Gastrocnemius medialis (tissue), 4 donors: ENCODE measurements at regions of chr15 and their contacts with region 1.

Region 1: GRCh38 chr15:70701891-70702568 is 61.3 kb downstream of the UACA start:
- DNase-seq: peak; percentile 48 to 56
- ATAC-seq: peak; percentile 85 to 90
- H3K4me3 ChIP-seq: peak overlapping the region; percentile 41 to 53 (median 46)
- H3K27ac ChIP-seq: peak overlapping the region; percentile 79 to 92 (median 88)
- H3K4me1 ChIP-seq: peaks cover 61 to 92% of the 10 kb centered on the region in 2 donors
- H3K27me3 ChIP-seq: no peaks in the 10 kb centered on the region
- CTCF ChIP-seq: no peak
- POLR2A ChIP-seq: peak; percentile 65 to 85

Region 2: DNA sequence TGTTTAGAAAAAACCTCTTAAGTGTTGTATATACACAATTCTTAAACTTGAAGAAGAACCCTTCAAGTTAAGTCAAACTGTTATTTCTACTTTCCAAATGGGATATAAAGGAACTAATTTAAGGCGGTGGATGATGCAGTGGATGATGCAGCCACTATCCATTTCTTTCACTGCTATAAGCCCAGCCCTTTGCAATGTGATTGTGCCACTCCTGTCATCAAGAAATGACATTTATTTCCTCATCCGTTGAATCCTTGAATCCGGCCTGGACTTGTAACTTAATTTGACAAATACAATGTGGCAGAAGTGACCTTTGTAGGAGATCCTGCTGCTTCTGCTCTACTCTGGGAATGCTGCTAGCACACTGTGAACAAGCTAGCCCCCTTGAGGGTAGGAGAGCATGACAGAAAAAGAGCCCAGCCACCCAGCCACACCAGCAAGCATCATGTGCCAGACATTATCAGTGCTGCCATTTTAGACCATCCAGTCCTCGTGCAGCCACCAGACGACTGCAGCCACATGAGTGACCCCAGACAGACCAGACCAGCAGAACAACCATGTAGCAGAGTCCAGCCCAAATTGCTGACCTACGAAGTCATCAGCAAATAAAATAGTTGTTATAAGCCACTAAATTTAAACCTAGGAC is 13.9 kb after region 1 on chr15:
- in situ Hi-C with region 1: no loop called
- intact Hi-C with region 1: loop called (anchors 2 kb)
- DNase-seq: peak in 1 of 2 donors; percentile 38
- ATAC-seq: peak; percentile 25 to 48
- H3K4me3 ChIP-seq: no peak overlapping the region
- H3K27ac ChIP-seq: peak overlapping the region; percentile 81 to 88 (median 84)
- H3K4me1 ChIP-seq: peaks cover 75 to 93% of the 10 kb centered on the region in 2 donors
- H3K27me3 ChIP-seq: no peaks in the 10 kb centered on the region
- CTCF ChIP-seq: no peak
- POLR2A ChIP-seq: no peak

Region 3: DNA sequence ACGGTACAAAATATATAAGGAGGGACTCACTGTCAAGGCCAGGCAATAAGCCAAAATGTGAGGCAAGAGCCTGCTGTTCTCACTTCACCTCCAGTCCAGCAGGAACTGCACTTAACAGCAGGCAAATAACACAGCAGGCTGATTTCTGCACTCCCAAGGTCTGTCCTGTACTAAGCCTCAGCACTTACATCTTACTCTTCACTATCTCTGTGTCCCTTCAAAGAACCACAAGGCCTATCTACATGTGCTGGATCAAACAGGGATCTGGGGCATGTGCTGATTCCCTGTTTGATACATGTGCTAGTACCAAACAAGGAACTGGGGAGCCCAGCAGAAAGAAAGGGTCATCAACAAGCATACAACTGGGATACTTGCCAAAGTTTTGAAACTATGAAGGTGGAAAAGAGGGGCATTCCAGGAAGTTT is 39.1 kb after region 1 on chr15:
- in situ Hi-C with region 1: no loop called
- intact Hi-C with region 1: loop called (anchors 5 kb)
- DNase-seq: peak; percentile 90 to 92
- ATAC-seq: peak; percentile 81 to 87
- H3K4me3 ChIP-seq: peak overlapping the region in 2 of 4 donors; percentile 24 to 44
- H3K27ac ChIP-seq: peak overlapping the region; percentile 88 to 95 (median 91)
- H3K4me1 ChIP-seq: peaks cover 78 to 87% of the 10 kb centered on the region in 2 donors
- H3K27me3 ChIP-seq: no peaks in the 10 kb centered on the region
- CTCF ChIP-seq: no peak
- POLR2A ChIP-seq: peak in 1 of 2 donors; percentile 45

Region 4: DNA sequence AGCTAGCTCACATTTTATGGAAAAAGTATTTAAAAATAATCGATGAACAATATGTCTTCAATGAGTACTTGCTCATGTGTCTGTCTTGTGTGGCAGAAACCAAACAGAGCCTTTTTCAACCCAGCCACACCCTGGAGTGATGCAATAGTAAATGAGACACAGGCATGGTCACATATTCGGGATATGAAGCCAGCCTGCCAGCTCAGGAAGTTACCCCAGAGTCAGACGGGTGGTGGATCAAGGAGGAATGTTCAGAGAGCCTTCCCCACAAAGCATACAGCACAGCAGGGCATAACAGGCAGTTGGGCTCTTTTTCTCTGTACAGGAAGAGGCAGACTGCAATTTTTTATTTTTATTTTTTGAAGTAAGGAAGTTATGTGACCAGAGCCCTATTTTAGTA is 124.6 kb after region 1 on chr15:
- in situ Hi-C with region 1: no loop called
- intact Hi-C with region 1: no loop called
- DNase-seq: peak; percentile 44 to 67
- ATAC-seq: peak; percentile 50 to 60
- H3K4me3 ChIP-seq: no peak overlapping the region
- H3K27ac ChIP-seq: peak overlapping the region; percentile 36 to 52 (median 50)
- H3K4me1 ChIP-seq: peaks cover 7 to 28% of the 10 kb centered on the region in 2 donors
- H3K27me3 ChIP-seq: no peaks in the 10 kb centered on the region
- CTCF ChIP-seq: no peak
- POLR2A ChIP-seq: no peak

Region 5: GRCh38 chr15:70853821-70854666 is 152.0 kb after region 1 on chr15 and contains the start of gene LARP6:
- in situ Hi-C with region 1: no loop called
- intact Hi-C with region 1: no loop called
- DNase-seq: peak in 1 of 2 donors; percentile 34
- ATAC-seq: peak; percentile 55 to 63
- H3K4me3 ChIP-seq: peak within 1 kb of the TSS; percentile 55 to 79 (median 68)
- H3K27ac ChIP-seq: peak within 1 kb of the TSS; percentile 68 to 84 (median 77)
- H3K4me1 ChIP-seq: peaks cover 0 to 15% of the 10 kb centered on the region in 2 donors
- H3K27me3 ChIP-seq: no peaks in the 10 kb centered on the region
- CTCF ChIP-seq: peak in 1 of 5 experiments; percentile 9
- POLR2A ChIP-seq: peak; percentile 53 to 69
- total RNA-seq, gene LARP6: 10.0 to 20.6 (median 13.9) TPM